ENCODE measurements at regions of chr7 and their contacts with region 1.

Region 1: DNA sequence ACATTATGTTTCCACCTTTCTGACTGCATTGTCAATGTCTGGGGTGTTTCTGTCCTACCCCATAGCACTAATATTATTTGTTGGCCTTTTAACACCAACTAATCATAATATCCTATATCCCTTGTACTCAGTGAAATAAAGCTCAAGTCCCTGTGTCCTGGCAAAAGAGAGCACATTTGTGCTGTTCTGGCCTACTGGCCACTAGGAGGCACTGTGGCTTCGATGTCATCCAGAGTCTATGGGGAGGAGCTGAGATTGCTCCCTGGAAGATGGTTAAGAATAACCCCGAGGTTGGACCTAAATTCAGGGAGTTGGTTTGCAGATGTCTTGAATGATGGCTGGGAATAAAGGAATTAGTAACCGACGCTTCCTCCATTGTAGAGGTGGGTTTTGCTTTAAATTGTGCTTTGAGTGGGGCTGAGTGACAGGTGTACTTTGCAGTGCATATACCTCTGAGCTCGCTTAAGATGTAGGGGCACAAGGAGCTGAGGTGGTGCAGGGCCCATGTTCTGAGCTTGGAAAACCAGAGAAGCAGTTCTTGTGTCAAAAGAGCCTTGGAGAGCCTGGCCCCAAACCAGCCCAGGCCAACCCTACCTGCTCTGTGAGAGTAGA is 191.2 kb upstream of the PRSS1 start:
- H3K4me3 Mint-ChIP-seq: no peak overlapping the region
- H3K27ac Mint-ChIP-seq: peak overlapping the region; percentile 30
- H3K4me1 Mint-ChIP-seq: peaks cover 55% of the 10 kb centered on the region
- H3K27me3 Mint-ChIP-seq: peaks cover 8% of the 10 kb centered on the region

Region 2: GRCh38 chr7:142598297-142598696 is 40.2 kb after region 1 on chr7:
- intact Hi-C with region 1: loop called (anchors 5 kb)
- H3K4me3 Mint-ChIP-seq: no peak overlapping the region
- H3K27ac Mint-ChIP-seq: no peak overlapping the region
- H3K4me1 Mint-ChIP-seq: peaks cover 10% of the 10 kb centered on the region
- H3K27me3 Mint-ChIP-seq: peaks cover 8% of the 10 kb centered on the region